ENCODE measurements at regions of chr3 and their contacts with region 1.

Region 1: DNA sequence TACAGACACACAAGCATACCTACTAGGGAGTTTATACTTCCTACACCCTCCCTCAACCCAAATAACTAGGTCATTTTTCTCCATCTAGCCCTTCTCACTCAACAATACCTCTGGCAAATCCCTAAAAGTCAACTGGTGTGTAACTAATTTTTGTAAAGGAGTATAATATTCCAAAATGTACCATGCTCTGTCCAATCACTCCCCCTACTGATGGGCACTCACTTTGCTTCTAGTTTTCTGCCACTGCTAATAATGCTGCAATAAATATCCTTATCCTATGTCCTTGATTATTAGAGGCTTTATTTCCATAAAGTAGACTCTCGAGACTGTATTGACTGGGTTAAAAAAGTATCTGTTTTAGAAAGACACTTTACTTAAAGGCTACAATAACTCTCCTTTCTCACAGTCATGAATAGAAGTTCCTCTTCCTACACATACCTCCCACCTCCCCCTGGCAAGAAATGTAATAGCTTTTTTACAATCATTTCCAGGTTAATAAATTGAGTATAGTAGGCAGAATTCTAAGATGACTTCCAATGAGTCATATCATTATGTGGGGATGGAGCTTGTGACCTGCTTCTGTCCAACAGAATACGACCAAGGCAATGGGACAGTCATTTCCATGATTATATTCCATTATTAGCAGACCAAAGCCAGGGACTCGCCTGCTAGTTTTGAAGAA is 30.0 kb downstream of the SHQ1 start:
- DNase-seq: no peak
- ATAC-seq: no peak
- H3K4me3 Mint-ChIP-seq: no peak overlapping the region
- H3K27ac Mint-ChIP-seq: no peak overlapping the region
- H3K4me1 Mint-ChIP-seq: peaks cover 23% of the 10 kb centered on the region
- H3K27me3 Mint-ChIP-seq: no peaks in the 10 kb centered on the region
- CTCF ChIP-seq: no peak

Region 2: DNA sequence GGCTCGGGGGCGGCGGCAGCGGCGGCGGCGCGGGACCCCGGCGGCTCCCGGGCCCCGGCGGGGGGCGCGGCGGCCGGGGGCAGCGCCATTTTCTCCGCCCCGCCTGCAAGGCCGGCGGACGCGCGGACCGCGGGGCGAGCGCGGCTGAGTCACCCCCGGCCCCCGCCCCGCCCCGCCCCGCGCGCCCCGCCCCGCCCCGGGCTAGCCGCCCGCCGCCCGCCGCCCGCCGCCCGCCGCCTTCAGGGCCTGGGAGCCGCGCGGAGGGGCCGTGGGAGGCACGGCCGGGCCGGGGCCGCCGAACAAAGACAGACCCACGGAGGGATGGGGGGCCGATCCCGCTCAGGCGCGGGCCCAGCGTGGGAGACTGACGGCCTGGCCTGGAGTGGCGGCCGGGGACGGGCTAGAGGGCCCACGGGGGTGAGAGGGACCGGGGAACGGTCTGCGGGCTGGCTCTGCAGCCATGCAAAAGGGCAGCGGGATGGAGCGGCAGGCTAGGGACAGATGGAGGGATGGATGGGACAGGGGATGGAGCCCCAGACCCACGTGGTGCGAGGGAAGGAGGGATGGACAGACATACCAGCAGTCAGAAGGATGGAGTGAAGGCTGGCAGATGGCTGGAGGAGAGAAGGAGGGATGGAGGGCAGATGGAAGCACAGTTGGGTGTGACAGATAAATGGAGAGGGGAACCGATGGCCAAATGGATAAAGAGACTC is 1092.8 kb before region 1 on chr3 and contains the start of gene EIF4E3:
- CTCF ChIA-PET with region 1: interaction called, 72 read pairs
- POLR2A ChIA-PET with region 1: no interaction called
- intact Hi-C with region 1: loop called (anchors 1 kb)
- DNase-seq: peak; percentile 53
- ATAC-seq: peak; percentile 72
- H3K4me3 Mint-ChIP-seq: peak within 1 kb of the TSS; percentile 86
- H3K27ac Mint-ChIP-seq: peak within 1 kb of the TSS; percentile 41
- H3K4me1 Mint-ChIP-seq: peaks cover 37% of the 10 kb centered on the region
- H3K27me3 Mint-ChIP-seq: peaks cover 17% of the 10 kb centered on the region
- CTCF ChIP-seq: no peak
- total RNA-seq, gene EIF4E3: 1.8 and 2.0 TPM in 2 replicates

Region 3: DNA sequence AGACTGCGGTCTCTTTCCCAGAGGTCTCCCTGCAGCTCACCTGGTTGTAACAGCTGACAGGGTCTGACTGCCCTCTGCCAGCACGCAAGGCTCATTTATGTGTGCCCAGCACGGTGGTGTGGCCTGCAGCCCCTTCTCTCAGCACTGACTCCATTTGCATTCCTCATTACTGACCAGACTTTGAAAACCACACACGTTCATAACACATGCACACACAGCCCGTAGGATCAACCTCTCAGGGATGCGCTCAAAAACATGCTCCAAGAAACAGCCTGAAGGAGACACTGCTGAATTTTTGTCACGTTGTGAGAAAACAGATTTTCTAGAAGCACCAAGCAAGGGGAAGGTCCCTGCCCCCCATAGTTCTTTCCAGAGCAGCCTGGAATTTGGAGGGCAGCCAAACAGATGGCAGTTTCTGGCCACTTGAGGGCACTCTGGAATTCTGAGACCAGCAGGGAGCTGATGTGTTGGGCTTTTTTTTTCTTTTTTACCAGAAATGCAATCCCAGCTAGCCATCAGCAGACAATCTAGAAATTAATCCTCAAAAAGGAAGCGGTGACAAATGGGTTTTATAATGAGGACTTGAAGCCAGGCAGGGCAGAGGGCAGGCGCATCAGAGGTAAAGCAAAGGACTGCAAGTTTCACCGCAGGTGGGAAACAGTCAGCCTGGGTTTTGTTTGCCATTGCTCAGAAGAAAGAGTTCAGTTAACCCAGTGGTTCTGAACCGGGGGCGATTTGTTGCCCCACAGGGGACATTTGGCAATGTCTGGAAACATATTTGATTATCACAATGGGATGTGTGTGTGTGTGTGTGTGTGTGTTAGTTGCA is 862.8 kb before region 1 on chr3:
- CTCF ChIA-PET with region 1: interaction called, 12 read pairs
- POLR2A ChIA-PET with region 1: no interaction called
- intact Hi-C with region 1: loop called (anchors 1 kb)
- DNase-seq: no peak
- ATAC-seq: no peak
- H3K4me3 Mint-ChIP-seq: no peak overlapping the region
- H3K27ac Mint-ChIP-seq: no peak overlapping the region
- H3K4me1 Mint-ChIP-seq: peaks cover 12% of the 10 kb centered on the region
- H3K27me3 Mint-ChIP-seq: peaks cover 8% of the 10 kb centered on the region
- CTCF ChIP-seq: no peak

Region 4: DNA sequence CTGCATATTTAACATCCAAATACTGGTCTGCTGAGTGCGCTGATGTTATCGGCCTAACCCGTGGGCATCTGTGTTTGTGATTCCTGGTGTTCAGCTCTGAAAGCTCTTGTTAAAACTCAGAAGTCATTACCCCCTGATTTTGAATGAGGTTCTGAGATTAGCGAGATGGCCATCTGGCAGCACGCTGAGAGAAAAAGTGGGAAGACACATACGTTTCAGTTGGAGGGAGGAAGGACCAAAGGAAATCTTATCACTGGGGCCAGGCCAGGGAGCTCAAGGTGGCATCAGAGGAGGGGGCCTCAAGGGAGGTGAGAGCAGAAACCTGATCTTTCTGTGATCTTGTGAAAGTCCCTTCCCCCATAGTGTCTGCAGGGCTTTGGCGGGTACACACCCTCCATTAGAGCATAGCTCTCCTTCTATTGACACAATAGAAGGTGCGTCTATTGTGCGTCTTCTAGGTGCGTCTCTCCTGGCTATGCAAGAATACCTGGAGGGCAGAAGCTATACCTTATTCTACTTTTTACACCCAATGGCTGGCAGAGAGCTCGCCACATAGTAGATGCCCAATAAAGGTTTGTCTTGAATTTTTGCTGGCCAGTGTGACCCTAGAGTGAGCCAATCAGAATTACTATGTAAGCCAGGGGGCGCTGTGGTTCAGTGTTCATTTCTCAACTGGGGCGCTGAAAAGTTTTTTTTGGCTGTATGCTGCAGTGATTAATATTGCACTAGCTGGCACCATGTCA is 152.4 kb before region 1 on chr3:
- CTCF ChIA-PET with region 1: interaction called, 54 read pairs
- POLR2A ChIA-PET with region 1: no interaction called
- intact Hi-C with region 1: loop called (anchors 1 kb)
- DNase-seq: no peak
- ATAC-seq: peak; percentile 50
- H3K4me3 Mint-ChIP-seq: no peak overlapping the region
- H3K27ac Mint-ChIP-seq: no peak overlapping the region
- H3K4me1 Mint-ChIP-seq: no peaks in the 10 kb centered on the region
- H3K27me3 Mint-ChIP-seq: peaks cover 6% of the 10 kb centered on the region
- CTCF ChIP-seq: no peak

Region 5: GRCh38 chr3:72782521-72782920 is 35.7 kb before region 1 on chr3:
- CTCF ChIA-PET with region 1: no interaction called
- POLR2A ChIA-PET with region 1: no interaction called
- intact Hi-C with region 1: no loop called
- DNase-seq: no peak
- ATAC-seq: no peak
- H3K4me3 Mint-ChIP-seq: no peak overlapping the region
- H3K27ac Mint-ChIP-seq: no peak overlapping the region
- H3K4me1 Mint-ChIP-seq: no peaks in the 10 kb centered on the region
- H3K27me3 Mint-ChIP-seq: no peaks in the 10 kb centered on the region
- CTCF ChIP-seq: no peak

Measured in activated B cell treated with CpG ODN at 0.5 μM for 24 hours (primary cell).